Heart right ventricle (tissue), 16 donors: ENCODE measurements at regions of chr2 and their contacts with region 1.

Region 1: DNA sequence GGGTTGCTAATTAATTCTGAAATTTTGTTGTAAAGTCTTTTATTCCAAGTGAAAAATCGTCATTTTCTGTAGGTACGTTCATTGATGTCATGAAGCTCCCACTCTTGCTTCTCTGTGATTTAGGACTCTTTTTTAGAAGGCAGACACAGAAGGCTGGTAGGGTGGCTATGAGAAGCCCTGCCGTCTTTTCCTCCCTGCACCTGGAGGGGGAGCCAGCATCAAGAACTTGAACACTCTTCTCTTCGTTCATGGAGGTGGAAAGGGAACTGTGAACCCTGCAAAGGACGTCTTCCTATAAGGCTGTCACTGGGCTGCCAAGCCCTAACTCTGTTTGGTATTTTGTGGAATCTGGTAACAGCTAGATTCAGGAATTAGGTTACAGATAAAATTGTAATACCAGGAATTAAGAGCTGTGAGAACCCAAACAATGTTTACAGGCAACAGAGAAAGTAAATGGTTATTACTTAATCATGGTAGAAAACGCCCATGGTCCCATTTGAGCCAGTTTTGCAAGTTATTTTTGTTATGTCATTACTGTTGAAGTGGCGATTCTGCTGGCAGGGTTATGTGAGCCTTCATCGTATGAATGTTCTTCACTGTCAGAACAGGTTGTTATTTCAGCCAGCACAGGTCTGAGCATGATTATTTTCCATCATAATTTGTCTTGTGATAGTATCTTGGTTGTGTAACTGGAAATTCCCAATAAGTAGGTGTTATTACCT is 112.2 kb downstream of the OSBPL6 start:
- DNase-seq: peak in 1 of 2 donors; percentile 19
- ATAC-seq: peak in 4 of 8 donors; percentile 58 to 71 (median 66)
- H3K4me3 ChIP-seq: no peak overlapping the region
- H3K27ac ChIP-seq: no peak overlapping the region
- H3K4me1 ChIP-seq: peaks cover 0 to 8% (median 0%) of the 10 kb centered on the region in 9 donors
- H3K27me3 ChIP-seq: no peaks in the 10 kb centered on the region
- CTCF ChIP-seq: peak in 8 of 9 donors; percentile 8 to 57 (median 47)

Region 2: GRCh38 chr2:178553047-178553446 is 246.5 kb after region 1 on chr2:
- intact Hi-C with region 1: loop called in 1 of 10 experiments (anchors 2 kb)
- DNase-seq: no peak
- ATAC-seq: no peak
- H3K4me3 ChIP-seq: no peak overlapping the region
- H3K27ac ChIP-seq: no peak overlapping the region
- H3K4me1 ChIP-seq: peaks cover 0 to 63% (median 6%) of the 10 kb centered on the region in 9 donors
- H3K27me3 ChIP-seq: no peaks in the 10 kb centered on the region
- CTCF ChIP-seq: no peak